Naive thymus-derived CD4-positive, alpha-beta T cell (primary cell): ENCODE measurements at regions of chr5 and their contacts with region 1.

Region 1: DNA sequence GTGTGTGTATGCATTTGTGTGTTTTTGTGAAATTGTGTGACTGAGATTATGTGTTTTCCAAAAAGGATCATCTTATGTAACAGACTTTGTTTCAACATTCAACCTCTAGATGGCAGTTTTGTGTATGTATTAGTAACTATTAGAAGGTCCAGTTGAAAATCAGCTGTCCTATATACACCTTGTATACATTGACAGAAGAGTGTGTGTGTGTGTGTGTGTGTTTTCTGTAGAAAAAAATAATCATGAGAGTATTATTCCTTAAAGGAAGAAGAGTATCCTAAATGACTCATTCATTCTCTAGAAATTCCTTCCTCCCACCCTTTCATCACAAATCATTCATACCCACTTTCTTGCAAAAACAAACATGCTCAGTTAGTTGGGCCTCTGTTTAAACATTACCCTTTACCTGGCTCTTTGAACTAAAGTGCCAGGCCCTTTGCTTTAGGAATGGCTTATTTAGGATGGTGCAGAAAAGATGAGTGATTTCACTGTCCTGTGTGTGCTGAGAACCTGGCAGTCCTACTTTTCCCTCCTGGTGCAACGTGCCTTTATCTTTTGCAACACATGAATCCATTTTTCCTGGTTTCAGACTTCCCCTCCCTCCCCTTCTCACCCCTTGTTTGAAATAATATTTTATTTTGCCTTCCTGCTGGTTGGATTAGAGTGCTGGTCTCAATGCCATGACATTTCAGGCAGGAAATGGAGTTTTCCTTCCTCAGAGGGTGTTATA is 152.2 kb downstream of the ARHGAP26 start:
- DNase-seq: peak in 1 of 9 donors; percentile 3
- ATAC-seq: peak; percentile 50
- H3K4me3 ChIP-seq: no peak overlapping the region
- H3K4me3 Mint-ChIP-seq: no peak overlapping the region
- H3K27ac ChIP-seq: no peak overlapping the region
- H3K27ac Mint-ChIP-seq: peak overlapping the region in 2 of 9 donors; percentile 9 to 19
- H3K4me1 ChIP-seq: peaks cover 0 to 19% of the 10 kb centered on the region in 2 donors
- H3K4me1 Mint-ChIP-seq: peaks cover 7 to 40% (median 11%) of the 10 kb centered on the region in 7 donors
- H3K27me3 ChIP-seq: no peaks in the 10 kb centered on the region
- H3K27me3 Mint-ChIP-seq: no peaks in the 10 kb centered on the region

Region 2: DNA sequence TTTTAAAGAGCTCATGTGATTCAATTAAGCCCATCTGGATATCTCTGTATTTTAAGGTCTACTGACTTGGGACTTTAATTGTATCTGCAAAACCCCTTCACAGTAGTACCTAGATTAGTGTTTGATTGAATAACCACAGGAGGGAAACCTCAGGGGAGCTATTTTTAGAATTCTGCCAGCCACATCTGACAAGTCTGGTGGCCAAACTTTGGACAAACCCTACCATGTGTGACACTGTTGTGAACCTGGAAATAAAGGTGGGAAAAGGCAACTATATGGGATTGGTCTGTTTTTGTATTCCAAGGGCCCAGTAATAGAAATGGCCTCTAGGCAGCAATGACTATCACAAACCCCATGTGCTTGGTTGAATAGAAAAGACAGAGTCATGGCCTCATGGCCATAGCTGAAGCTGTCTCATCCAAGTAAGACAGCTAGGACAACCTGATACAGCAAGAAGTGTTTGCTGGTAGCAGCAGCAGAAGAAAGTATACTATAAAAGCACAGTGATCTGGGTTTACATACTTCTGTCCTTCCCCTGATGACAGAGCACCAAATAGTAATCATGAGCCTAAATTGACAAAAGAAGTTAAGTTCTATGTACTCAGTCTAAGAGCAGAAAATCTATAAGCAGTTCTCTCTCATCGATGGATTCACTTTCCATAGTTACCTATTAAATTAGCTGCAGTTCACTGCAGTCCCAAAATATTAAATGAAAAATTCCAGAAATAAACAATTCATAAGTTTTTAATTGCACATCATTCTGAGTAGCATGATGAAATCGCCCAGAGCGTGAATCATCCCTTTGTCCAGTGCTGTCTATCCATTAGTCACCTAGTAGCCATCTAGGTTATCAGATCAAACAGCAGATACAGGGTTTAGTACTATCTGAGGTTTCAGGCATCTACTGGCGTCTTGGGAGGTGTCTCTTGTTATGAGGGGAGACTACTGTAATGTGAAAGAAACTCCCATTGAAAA is 37.6 kb after region 1 on chr5:
- CTCF ChIA-PET with region 1: no interaction called
- POLR2A ChIA-PET with region 1: no interaction called
- intact Hi-C with region 1: loop called in 1 of 2 experiments (anchors 5 kb)
- DNase-seq: no peak
- ATAC-seq: peak; percentile 76
- H3K4me3 ChIP-seq: no peak overlapping the region
- H3K4me3 Mint-ChIP-seq: no peak overlapping the region
- H3K27ac ChIP-seq: no peak overlapping the region
- H3K27ac Mint-ChIP-seq: peak overlapping the region in 1 of 9 donors; percentile 15
- H3K4me1 ChIP-seq: peaks cover 0 to 20% of the 10 kb centered on the region in 2 donors
- H3K4me1 Mint-ChIP-seq: peaks cover 6 to 28% (median 15%) of the 10 kb centered on the region in 7 donors
- H3K27me3 ChIP-seq: no peaks in the 10 kb centered on the region
- H3K27me3 Mint-ChIP-seq: no peaks in the 10 kb centered on the region

Region 3: GRCh38 chr5:143968011-143968878 is 1045.9 kb after region 1 on chr5:
- CTCF ChIA-PET with region 1: no interaction called
- POLR2A ChIA-PET with region 1: no interaction called
- intact Hi-C with region 1: loop called (anchors 1 kb)
- DNase-seq: peak in 6 of 9 donors; percentile 13 to 43 (median 27)
- ATAC-seq: no peak
- H3K4me3 ChIP-seq: no peak overlapping the region
- H3K4me3 Mint-ChIP-seq: no peak overlapping the region
- H3K27ac ChIP-seq: no peak overlapping the region
- H3K27ac Mint-ChIP-seq: no peak overlapping the region
- H3K4me1 ChIP-seq: no peaks in the 10 kb centered on the region
- H3K4me1 Mint-ChIP-seq: peaks cover 0 to 6% (median 0%) of the 10 kb centered on the region in 7 donors
- H3K27me3 ChIP-seq: no peaks in the 10 kb centered on the region
- H3K27me3 Mint-ChIP-seq: peaks cover 6 to 27% (median 22%) of the 10 kb centered on the region in 5 donors